ENCODE measurements at regions of chr6 and their contacts with region 1.

Region 1: GRCh38 chr6:25992413-25993037 is 29.9 kb downstream of the TRIM38 start:
- DNase-seq: peak; percentile 88
- H3K4me3 ChIP-seq: peak overlapping the region; percentile 42 to 62 (median 48)
- H3K27ac ChIP-seq: peak overlapping the region; percentile 68
- H3K4me1 ChIP-seq: peaks cover 7% of the 10 kb centered on the region
- H3K27me3 ChIP-seq: no peaks in the 10 kb centered on the region
- CTCF ChIP-seq: peak; percentile 92 to 95

Region 2: GRCh38 chr6:25173951-25174474 is 818.5 kb before region 1 on chr6:
- CTCF ChIA-PET with region 1: interaction called, 31 read pairs
- dilution Hi-C with region 1: no loop called
- in situ Hi-C with region 1: no loop called
- intact Hi-C with region 1: no loop called
- DNase-seq: peak; percentile 92
- H3K4me3 ChIP-seq: no peak overlapping the region
- H3K27ac ChIP-seq: peak overlapping the region; percentile 92
- H3K4me1 ChIP-seq: peaks cover 50% of the 10 kb centered on the region
- H3K27me3 ChIP-seq: no peaks in the 10 kb centered on the region
- CTCF ChIP-seq: no peak

Region 3: GRCh38 chr6:25389471-25389870 is 603.1 kb before region 1 on chr6:
- CTCF ChIA-PET with region 1: interaction called, 11 read pairs
- dilution Hi-C with region 1: no loop called
- in situ Hi-C with region 1: no loop called
- intact Hi-C with region 1: no loop called
- DNase-seq: peak; percentile 72
- H3K4me3 ChIP-seq: no peak overlapping the region
- H3K27ac ChIP-seq: no peak overlapping the region
- H3K4me1 ChIP-seq: peaks cover 13% of the 10 kb centered on the region
- H3K27me3 ChIP-seq: no peaks in the 10 kb centered on the region
- CTCF ChIP-seq: no peak

Region 4: GRCh38 chr6:25788305-25788922 is 204.1 kb before region 1 on chr6:
- CTCF ChIA-PET with region 1: no interaction called
- dilution Hi-C with region 1: no loop called
- in situ Hi-C with region 1: no loop called
- intact Hi-C with region 1: loop called (anchors 1 kb)
- DNase-seq: peak; percentile 39
- H3K4me3 ChIP-seq: no peak overlapping the region
- H3K27ac ChIP-seq: no peak overlapping the region
- H3K4me1 ChIP-seq: no peaks in the 10 kb centered on the region
- H3K27me3 ChIP-seq: no peaks in the 10 kb centered on the region
- CTCF ChIP-seq: peak; percentile 70 to 77

Region 5: DNA sequence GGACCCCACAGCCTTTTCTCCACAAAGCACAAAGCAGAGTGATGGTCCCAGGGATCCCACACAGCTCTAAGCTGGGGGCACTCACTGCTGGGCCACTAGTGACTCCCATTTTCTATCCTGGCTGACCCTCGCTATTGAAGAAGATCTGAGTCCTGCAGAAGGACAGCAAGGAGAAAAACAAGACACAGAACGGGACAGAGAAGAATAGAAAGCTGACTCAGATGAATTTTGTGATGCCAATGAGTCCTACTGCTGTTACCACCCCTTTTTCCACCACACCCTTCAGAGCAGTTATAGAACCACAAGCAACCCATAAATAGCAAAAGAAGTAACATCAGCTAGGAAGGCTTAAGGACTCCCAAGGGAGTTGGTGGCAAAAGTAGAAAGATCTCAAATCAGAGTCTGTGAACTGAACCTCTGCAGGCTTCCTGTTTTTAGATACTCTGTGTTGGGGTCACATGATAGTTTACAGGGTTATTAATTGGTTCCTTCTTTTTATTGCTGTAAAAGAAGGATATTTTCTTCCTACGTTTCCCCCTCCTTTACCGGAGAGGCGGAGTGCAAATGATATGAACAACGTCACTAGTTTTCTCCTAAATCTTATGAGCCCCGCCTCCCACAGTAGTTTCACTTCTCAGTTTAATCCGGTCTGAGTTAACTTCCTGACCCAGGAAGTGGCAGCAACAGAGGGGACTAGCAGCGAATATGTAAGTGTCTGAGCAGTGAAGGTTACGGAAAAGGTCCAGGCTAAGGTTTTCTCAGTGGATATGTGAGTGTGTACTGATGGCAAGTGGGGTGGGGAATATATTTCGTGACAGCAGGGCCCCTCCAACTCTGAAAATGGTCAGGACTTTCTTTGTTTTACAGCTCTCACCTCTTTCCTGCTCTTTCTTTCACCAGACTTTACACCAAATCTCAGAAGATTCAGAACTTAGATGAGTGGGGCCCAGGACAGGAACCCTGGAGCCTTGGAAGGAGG is 30.1 kb before region 1 on chr6 and contains the start of gene TRIM38:
- CTCF ChIA-PET with region 1: no interaction called
- dilution Hi-C with region 1: no loop called
- in situ Hi-C with region 1: no loop called
- intact Hi-C with region 1: loop called (anchors 2 kb)
- DNase-seq: peak; percentile 85
- H3K4me3 ChIP-seq: peak within 1 kb of the TSS; percentile 50 to 61 (median 59)
- H3K27ac ChIP-seq: peak within 1 kb of the TSS; percentile 86
- H3K4me1 ChIP-seq: peaks cover 33% of the 10 kb centered on the region
- H3K27me3 ChIP-seq: no peaks in the 10 kb centered on the region
- CTCF ChIP-seq: no peak
- total RNA-seq, gene TRIM38: 6.8 to 7.6 TPM

Region 6: DNA sequence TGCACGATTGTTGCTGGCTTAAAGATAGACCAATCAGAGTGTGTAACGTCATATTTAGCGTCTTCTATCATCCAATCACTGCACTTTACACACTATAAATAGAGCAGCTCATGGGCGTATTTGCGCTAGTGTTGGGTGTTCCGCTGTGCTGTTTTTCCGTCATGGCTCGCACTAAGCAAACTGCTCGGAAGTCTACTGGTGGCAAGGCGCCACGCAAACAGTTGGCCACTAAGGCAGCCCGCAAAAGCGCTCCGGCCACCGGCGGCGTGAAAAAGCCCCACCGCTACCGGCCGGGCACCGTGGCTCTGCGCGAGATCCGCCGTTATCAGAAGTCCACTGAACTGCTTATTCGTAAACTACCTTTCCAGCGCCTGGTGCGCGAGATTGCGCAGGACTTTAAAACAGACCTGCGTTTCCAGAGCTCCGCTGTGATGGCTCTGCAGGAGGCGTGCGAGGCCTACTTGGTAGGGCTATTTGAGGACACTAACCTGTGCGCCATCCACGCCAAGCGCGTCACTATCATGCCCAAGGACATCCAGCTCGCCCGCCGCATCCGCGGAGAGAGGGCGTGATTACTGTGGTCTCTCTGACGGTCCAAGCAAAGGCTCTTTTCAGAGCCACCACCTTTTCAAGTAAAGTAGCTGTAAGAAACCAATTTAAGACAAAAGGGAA is 27.9 kb after region 1 on chr6:
- CTCF ChIA-PET with region 1: interaction called, 11 read pairs
- dilution Hi-C with region 1: no loop called
- in situ Hi-C with region 1: no loop called
- intact Hi-C with region 1: no loop called
- DNase-seq: peak; percentile 79
- H3K4me3 ChIP-seq: peak overlapping the region; percentile 39 to 56 (median 54)
- H3K27ac ChIP-seq: peak overlapping the region; percentile 85
- H3K4me1 ChIP-seq: peaks cover 36% of the 10 kb centered on the region
- H3K27me3 ChIP-seq: no peaks in the 10 kb centered on the region
- CTCF ChIP-seq: peak in 1 of 2 donors; percentile 9